Activated CD8-positive, alpha-beta T cell treated with anti-CD3 and anti-CD28 coated beads for 36 hours (primary cell): ENCODE measurements at regions of chr5 and their contacts with region 1.

Region 1: GRCh38 chr5:172697123-172698121 is 56.4 kb downstream of the NEURL1B start:
- DNase-seq: peak; percentile 89
- ATAC-seq: peak; percentile 97
- H3K4me3 Mint-ChIP-seq: peak overlapping the region; percentile 78
- H3K27ac Mint-ChIP-seq: peak overlapping the region; percentile 80
- H3K4me1 Mint-ChIP-seq: peaks cover 19% of the 10 kb centered on the region
- H3K27me3 Mint-ChIP-seq: peaks cover 15% of the 10 kb centered on the region
- CTCF ChIP-seq: peak; percentile 90

Region 2: GRCh38 chr5:172458976-172459782 is 238.2 kb before region 1 on chr5:
- CTCF ChIA-PET with region 1: interaction called, 23 read pairs
- POLR2A ChIA-PET with region 1: no interaction called
- intact Hi-C with region 1: loop called (anchors 5 kb)
- DNase-seq: no peak
- ATAC-seq: no peak
- H3K4me3 Mint-ChIP-seq: no peak overlapping the region
- H3K27ac Mint-ChIP-seq: no peak overlapping the region
- H3K4me1 Mint-ChIP-seq: peaks cover 17% of the 10 kb centered on the region
- H3K27me3 Mint-ChIP-seq: peaks cover 8% of the 10 kb centered on the region
- CTCF ChIP-seq: no peak

Region 3: GRCh38 chr5:172479044-172479783 is 218.2 kb before region 1 on chr5:
- CTCF ChIA-PET with region 1: interaction called, 65 read pairs
- POLR2A ChIA-PET with region 1: no interaction called
- intact Hi-C with region 1: loop called (anchors 2 kb)
- DNase-seq: peak; percentile 81
- ATAC-seq: peak; percentile 98
- H3K4me3 Mint-ChIP-seq: no peak overlapping the region
- H3K27ac Mint-ChIP-seq: no peak overlapping the region
- H3K4me1 Mint-ChIP-seq: no peaks in the 10 kb centered on the region
- H3K27me3 Mint-ChIP-seq: no peaks in the 10 kb centered on the region
- CTCF ChIP-seq: peak; percentile 75

Region 4: DNA sequence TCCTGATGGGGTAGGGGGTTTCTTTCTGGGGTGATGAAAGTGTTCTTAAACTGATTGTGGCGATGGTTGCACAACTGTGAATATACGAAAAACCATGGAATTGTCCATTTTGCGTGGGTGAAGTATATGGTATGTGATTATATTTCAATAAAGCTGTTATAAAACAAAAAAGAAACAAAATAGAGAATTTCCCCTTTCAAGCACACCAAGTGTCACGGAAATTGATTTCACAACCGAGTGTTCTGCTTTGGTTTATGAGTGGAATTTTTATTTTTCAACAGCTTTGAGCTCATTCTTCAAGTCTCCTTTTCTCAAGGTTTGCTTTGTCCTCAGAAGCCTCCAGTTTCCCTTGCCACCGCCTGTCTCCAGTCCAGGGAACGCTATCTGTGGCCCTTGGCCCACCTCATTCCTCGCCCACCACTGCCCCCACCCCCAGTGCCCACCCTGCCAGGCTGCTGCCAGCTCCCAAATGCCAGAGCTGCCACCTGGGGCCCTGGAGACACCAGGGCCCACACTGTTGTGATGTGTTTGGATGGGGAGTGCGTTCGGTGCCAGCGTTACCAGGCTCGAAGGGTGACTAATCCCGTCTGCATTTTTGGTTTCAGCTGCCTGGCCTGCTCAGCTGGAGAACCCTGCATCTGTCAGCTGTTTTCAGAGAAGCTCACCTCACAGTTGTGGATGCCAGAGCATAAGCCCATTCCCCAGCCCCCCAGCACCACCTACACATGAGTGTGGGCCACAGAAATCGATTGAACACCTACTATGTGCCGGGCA is 43.2 kb after region 1 on chr5:
- CTCF ChIA-PET with region 1: no interaction called
- POLR2A ChIA-PET with region 1: no interaction called
- intact Hi-C with region 1: no loop called
- DNase-seq: no peak
- ATAC-seq: no peak
- H3K4me3 Mint-ChIP-seq: no peak overlapping the region
- H3K27ac Mint-ChIP-seq: no peak overlapping the region
- H3K4me1 Mint-ChIP-seq: peaks cover 3% of the 10 kb centered on the region
- H3K27me3 Mint-ChIP-seq: no peaks in the 10 kb centered on the region
- CTCF ChIP-seq: no peak

Region 5: GRCh38 chr5:172897481-172898217 is 200.2 kb after region 1 on chr5:
- CTCF ChIA-PET with region 1: no interaction called
- POLR2A ChIA-PET with region 1: no interaction called
- intact Hi-C with region 1: no loop called
- DNase-seq: no peak
- ATAC-seq: no peak
- H3K4me3 Mint-ChIP-seq: no peak overlapping the region
- H3K27ac Mint-ChIP-seq: peak overlapping the region; percentile 1
- H3K4me1 Mint-ChIP-seq: no peaks in the 10 kb centered on the region
- H3K27me3 Mint-ChIP-seq: no peaks in the 10 kb centered on the region
- CTCF ChIP-seq: no peak